ENCODE measurements at regions of chr14 and their contacts with region 1.

Region 1: GRCh38 chr14:55749201-55749812 is 169.3 kb downstream of the KTN1 start:
- DNase-seq: peak in 1 of 2 donors; percentile 21
- H3K4me3 ChIP-seq: no peak overlapping the region
- H3K27ac ChIP-seq: peak overlapping the region; percentile 23
- H3K4me1 ChIP-seq: peaks cover 0 to 4% of the 10 kb centered on the region in 2 donors
- H3K27me3 ChIP-seq: no peaks in the 10 kb centered on the region
- CTCF ChIP-seq: no peak
- POLR2A ChIP-seq: no peak

Region 2: GRCh38 chr14:55505846-55506245 is 243.5 kb before region 1 on chr14:
- intact Hi-C with region 1: loop called (anchors 5 kb)
- DNase-seq: no peak
- H3K4me3 ChIP-seq: no peak overlapping the region
- H3K27ac ChIP-seq: no peak overlapping the region
- H3K4me1 ChIP-seq: no peaks in the 10 kb centered on the region
- H3K27me3 ChIP-seq: no peaks in the 10 kb centered on the region
- CTCF ChIP-seq: no peak
- POLR2A ChIP-seq: no peak

Measured in breast epithelium (tissue), 4 donors.